A549 (cell line): ENCODE measurements at regions of chr11 and their contacts with region 1.

Region 1: DNA sequence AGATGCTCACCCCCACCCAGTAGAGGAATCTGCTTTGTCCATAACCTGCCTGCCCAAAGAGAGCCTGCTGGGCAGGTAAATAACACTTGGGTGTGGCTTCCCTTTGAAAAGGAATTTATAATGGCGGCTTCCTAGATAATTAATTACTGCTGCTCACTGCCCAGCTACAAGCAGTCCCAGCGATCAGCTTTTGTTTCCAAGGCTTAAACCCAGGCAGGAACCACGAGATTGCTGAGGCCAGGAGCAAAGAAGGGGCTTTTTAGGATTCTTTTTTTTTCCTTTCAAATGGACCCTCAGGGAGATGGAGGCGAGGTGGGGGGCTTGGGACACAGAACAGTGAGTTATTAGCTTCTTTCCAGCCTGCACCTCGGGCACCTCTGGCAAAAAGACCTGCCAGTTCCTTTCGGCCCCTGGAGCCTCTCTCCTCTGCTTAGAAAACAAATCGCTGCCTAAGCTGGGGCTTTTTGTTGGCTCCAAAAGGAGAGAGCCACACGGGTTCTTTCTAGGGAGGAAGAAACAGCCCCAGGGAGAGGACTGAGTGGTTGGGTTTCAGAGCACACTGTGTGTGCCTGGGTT is 107.2 kb downstream of the TSPAN18 start:
- DNase-seq: no peak
- ATAC-seq: no peak
- H3K4me3 ChIP-seq: no peak overlapping the region
- H3K27ac ChIP-seq: no peak overlapping the region
- H3K4me1 ChIP-seq: no peaks in the 10 kb centered on the region
- CTCF ChIP-seq: no peak
- EP300 ChIP-seq: no peak
- POLR2A ChIP-seq: no peak
- RAD21 ChIP-seq: no peak

Region 2: DNA sequence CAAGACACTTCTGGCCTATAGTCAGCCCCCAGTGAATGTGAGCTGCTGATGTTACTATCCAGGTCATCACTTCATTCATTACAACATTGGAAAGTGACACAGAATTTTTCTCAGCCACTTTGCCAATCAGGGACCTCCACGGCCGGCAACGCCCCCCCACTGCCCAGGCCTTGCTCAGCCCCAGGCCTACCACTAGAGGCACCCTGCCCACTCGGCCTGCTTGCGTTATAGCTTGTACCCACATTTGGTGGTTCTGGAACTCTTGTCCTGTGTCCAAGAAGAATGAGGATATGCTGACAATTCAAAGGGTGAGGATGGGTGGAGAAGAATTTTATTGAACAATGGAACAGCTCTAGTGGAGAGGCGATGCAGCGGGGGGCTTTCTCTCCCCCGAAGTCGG is 11.0 kb before region 1 on chr11:
- CTCF ChIA-PET with region 1: interaction called, 10 read pairs
- POLR2A ChIA-PET with region 1: no interaction called
- DNase-seq: peak in 1 of 2 experiments; percentile 28
- ATAC-seq: peak; percentile 41 to 85; a peak in 3 of 6 replicates
- H3K4me3 ChIP-seq: no peak overlapping the region
- H3K27ac ChIP-seq: no peak overlapping the region
- H3K4me1 ChIP-seq: no peaks in the 10 kb centered on the region
- CTCF ChIP-seq: no peak
- EP300 ChIP-seq: no peak
- POLR2A ChIP-seq: no peak
- RAD21 ChIP-seq: peak in 1 of 2 experiments; percentile 24; a peak in 1 of 5 replicates

Region 3: DNA sequence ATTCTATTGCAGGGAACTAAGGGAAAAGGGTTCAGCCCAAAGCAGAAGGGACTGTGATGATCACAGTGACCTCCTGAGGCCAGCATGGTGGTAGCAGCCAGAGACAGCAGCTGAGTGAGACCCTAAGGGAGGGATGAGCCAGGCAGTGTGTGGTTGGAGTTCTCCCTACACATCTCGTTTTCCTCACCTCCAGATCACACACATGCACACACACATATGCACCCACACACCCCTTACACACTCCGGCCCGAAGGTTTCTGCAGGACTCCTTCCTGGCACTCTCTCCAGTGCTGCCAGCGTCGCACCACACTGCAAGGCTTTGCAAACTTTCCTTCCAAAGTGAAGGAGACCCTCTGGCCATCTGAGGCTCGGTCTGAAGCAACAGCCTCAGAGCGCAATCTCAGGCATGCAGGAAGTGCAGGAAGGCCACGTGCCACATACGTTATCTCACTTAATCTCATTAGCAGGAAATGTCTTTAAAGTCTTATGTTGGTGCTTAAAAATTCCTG is 143.6 kb after region 1 on chr11:
- CTCF ChIA-PET with region 1: no interaction called
- POLR2A ChIA-PET with region 1: no interaction called
- DNase-seq: peak; percentile 34 to 36
- ATAC-seq: peak in 1 of 2 experiments; percentile 45; a peak in 3 of 6 replicates
- H3K4me3 ChIP-seq: no peak overlapping the region
- H3K27ac ChIP-seq: peak overlapping the region; percentile 18 to 81; a peak in 3 of 6 replicates
- H3K4me1 ChIP-seq: peaks cover 42% of the 10 kb centered on the region
- CTCF ChIP-seq: peak; percentile 29; the same call in 2 of the 3 replicates
- EP300 ChIP-seq: no peak
- POLR2A ChIP-seq: no peak
- RAD21 ChIP-seq: peak in 1 of 2 experiments; percentile 41; a peak in 2 of 5 replicates